ENCODE measurements at regions of chr6 and their contacts with region 1.

Region 1: GRCh38 chr6:50128420-50129005 is 78.8 kb upstream of the DEFB112 start:
- DNase-seq: peak; percentile 16
- CTCF ChIP-seq: no peak

Region 2: GRCh38 chr6:50278663-50279062 is 150.2 kb after region 1 on chr6:
- in situ Hi-C with region 1: no loop called
- DNase-seq: no peak
- CTCF ChIP-seq: no peak

Region 3: GRCh38 chr6:50591135-50591534 is 462.6 kb after region 1 on chr6:
- in situ Hi-C with region 1: loop called (anchors 25 kb)
- DNase-seq: no peak
- CTCF ChIP-seq: no peak

Region 4: GRCh38 chr6:50791900-50792508 is 663.5 kb after region 1 on chr6:
- in situ Hi-C with region 1: loop called (anchors 25 kb)
- DNase-seq: peak; percentile 28
- CTCF ChIP-seq: peak; percentile 48

Measured in GM13976 (cell line).